SK-N-SH (cell line): ENCODE measurements at regions of chr3 and their contacts with region 1.

Region 1: DNA sequence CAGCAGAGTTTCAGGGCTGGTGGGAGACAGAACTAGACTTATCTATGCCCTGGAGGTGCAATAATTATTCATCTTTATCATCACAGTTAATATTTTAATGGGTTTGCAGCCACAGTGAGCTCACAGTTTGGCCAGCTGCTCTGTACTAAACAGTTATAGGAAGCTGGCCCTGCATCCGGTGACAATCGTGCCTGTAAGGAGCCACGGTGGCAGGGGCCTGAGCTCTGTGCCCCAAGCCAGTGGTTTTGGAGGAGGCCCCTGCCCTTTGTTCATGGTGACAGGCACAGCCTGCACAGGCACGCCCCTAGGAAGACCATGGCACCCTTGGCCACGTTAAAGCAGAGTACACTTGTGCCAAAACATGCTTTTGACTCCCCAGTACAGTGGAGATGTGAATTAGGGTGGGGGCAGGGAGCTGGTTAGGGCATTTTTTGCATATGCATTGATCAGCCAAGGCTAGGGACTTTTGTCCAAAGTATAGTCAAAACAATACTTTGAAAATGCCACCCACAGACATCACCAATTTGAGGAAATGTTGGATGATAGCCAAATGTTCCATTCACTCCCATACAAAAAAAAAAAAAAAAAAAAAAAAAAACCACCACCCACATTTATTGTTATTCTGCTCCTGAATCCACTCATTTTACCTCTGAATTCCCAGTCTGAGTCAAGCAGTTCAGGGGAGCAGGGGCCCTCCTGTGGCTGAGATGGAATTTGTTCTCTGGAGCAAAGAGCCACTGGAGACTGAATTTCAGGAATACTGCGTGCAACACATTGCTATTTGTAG is 3.4 kb upstream of the RFTN1 start:
- DNase-seq: peak; percentile 58
- H3K4me3 ChIP-seq: no peak overlapping the region; a peak in 1 of 4 replicates
- H3K27ac ChIP-seq: peak overlapping the region in 1 of 2 experiments; percentile 100; a peak in 2 of 4 replicates
- H3K4me1 ChIP-seq: peaks cover 7 to 66% of the 10 kb centered on the region in 2 experiments; a peak in 2 of 4 replicates
- H3K27me3 ChIP-seq: no peaks in the 10 kb centered on the region
- CTCF ChIP-seq: peak; percentile 67
- EP300 ChIP-seq: peak in 1 of 2 experiments; percentile 94; a peak in 2 of 4 replicates
- RAD21 ChIP-seq: peak; percentile 85

Region 2: DNA sequence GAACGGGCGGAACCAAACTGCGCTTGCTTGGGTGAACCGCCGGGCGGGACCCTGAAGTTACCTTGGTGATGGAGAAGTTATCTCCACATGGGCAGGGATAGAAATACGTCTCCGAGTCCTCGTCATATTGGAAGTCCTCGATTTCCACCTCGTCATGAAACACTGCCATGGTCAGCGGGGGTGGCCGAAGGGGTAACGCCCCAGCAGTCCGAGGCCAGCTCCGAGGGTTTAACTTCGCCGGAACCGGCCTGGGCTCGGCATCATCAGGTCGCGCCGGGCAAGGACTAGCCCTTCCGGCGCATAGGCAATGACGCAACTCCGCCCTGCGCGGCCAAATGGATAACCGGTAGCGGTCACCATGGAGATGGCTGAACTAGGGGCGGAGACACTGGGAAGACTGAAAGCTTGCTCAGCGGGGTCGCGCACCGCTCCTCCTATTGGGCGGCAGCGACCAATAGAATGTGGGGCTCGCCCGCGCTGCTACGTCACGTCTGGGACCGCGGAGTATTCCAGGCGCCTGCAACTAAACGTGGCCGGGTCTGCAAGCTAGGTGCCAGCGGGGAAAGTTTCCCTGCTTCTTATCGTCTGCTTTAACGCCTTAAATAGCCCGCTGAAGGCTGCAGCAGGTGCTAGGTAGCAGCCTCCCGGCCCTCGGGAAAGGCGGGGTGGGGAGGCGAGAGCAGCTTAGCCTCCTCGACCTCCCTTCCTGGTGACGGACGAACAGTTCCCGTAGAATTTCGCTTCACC is 252.0 kb before region 1 on chr3 and contains the starts of genes DPH3 and OXNAD1:
- CTCF ChIA-PET with region 1: interaction called, 4 read pairs
- POLR2A ChIA-PET with region 1: interaction called, 11 read pairs
- DNase-seq: peak; percentile 93
- H3K4me3 ChIP-seq: peak within 1 kb of the TSS; percentile 83 to 86
- H3K27ac ChIP-seq: peak within 1 kb of the TSS; percentile 83 to 86
- H3K4me1 ChIP-seq: peaks cover 5 to 17% of the 10 kb centered on the region in 2 experiments
- H3K27me3 ChIP-seq: no peaks in the 10 kb centered on the region
- CTCF ChIP-seq: no peak
- EP300 ChIP-seq: no peak
- RAD21 ChIP-seq: no peak
- polyA plus RNA-seq, gene DPH3: 8.5 and 10.8 TPM in 2 replicates
- polyA plus RNA-seq, gene OXNAD1: 6.9 and 10.0 TPM in 2 replicates

Region 3: GRCh38 chr3:16441371-16441875 is 75.5 kb before region 1 on chr3:
- CTCF ChIA-PET with region 1: interaction called, 5 read pairs
- POLR2A ChIA-PET with region 1: interaction called, 11 read pairs
- DNase-seq: peak; percentile 36
- H3K4me3 ChIP-seq: no peak overlapping the region
- H3K27ac ChIP-seq: peak overlapping the region in 1 of 2 experiments; percentile 96; a peak in 2 of 4 replicates
- H3K4me1 ChIP-seq: peaks cover 6 to 40% of the 10 kb centered on the region in 2 experiments; a peak in 3 of 4 replicates
- H3K27me3 ChIP-seq: no peaks in the 10 kb centered on the region
- CTCF ChIP-seq: no peak
- EP300 ChIP-seq: peak in 1 of 2 experiments; percentile 93; a peak in 2 of 4 replicates
- RAD21 ChIP-seq: peak; percentile 19; the same call in 1 of the 2 replicates

Region 4: DNA sequence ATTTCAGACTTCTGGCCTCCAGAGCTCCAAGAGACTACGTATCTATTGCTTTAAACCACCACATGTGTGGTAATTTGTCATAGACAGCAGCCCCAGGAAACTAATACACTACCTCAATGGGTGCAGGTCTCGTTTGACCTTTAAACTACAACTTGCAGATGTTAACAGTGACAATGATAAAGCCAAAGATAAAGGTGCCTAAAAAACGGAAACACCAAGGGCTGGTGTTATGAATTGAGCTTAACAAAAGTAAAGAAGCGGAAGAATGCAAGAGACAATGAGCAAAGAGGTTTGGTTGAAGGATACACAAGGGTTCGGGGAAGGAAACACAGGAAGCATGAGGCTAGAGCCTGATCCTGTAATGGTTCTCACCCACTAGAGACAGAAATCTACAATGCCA is 54.2 kb before region 1 on chr3:
- CTCF ChIA-PET with region 1: interaction called, 6 read pairs
- POLR2A ChIA-PET with region 1: interaction called, 17 read pairs
- DNase-seq: no peak
- H3K4me3 ChIP-seq: no peak overlapping the region
- H3K27ac ChIP-seq: peak overlapping the region in 1 of 2 experiments; percentile 96; a peak in 2 of 4 replicates
- H3K4me1 ChIP-seq: peaks cover 5 to 37% of the 10 kb centered on the region in 2 experiments; a peak in 3 of 4 replicates
- H3K27me3 ChIP-seq: no peaks in the 10 kb centered on the region
- CTCF ChIP-seq: no peak
- EP300 ChIP-seq: no peak
- RAD21 ChIP-seq: no peak

Region 5: GRCh38 chr3:16489326-16490277 is 27.3 kb before region 1 on chr3:
- CTCF ChIA-PET with region 1: interaction called, 6 read pairs
- POLR2A ChIA-PET with region 1: interaction called, 51 read pairs
- DNase-seq: peak; percentile 33
- H3K4me3 ChIP-seq: no peak overlapping the region
- H3K27ac ChIP-seq: peak overlapping the region in 1 of 2 experiments; percentile 78; a peak in 2 of 4 replicates
- H3K4me1 ChIP-seq: peaks cover 4 to 28% of the 10 kb centered on the region in 2 experiments; a peak in 3 of 4 replicates
- H3K27me3 ChIP-seq: no peaks in the 10 kb centered on the region
- CTCF ChIP-seq: no peak
- EP300 ChIP-seq: peak in 1 of 2 experiments; percentile 63; a peak in 1 of 4 replicates
- RAD21 ChIP-seq: no peak; the same call in 1 of the 2 replicates

Region 6: GRCh38 chr3:16529264-16529663 is 12.4 kb after region 1 on chr3:
- CTCF ChIA-PET with region 1: interaction called, 14 read pairs
- POLR2A ChIA-PET with region 1: interaction called, 3 read pairs
- DNase-seq: no peak
- H3K4me3 ChIP-seq: no peak overlapping the region
- H3K27ac ChIP-seq: no peak overlapping the region
- H3K4me1 ChIP-seq: peaks cover 0 to 6% of the 10 kb centered on the region in 2 experiments; a peak in 2 of 4 replicates
- H3K27me3 ChIP-seq: no peaks in the 10 kb centered on the region; the same call in 1 of the 2 replicates
- CTCF ChIP-seq: peak; percentile 20
- EP300 ChIP-seq: no peak
- RAD21 ChIP-seq: no peak

Region 7: GRCh38 chr3:16550676-16551341 is 33.9 kb after region 1 on chr3:
- CTCF ChIA-PET with region 1: interaction called, 25 read pairs
- POLR2A ChIA-PET with region 1: interaction called, 13 read pairs
- DNase-seq: peak; percentile 73
- H3K4me3 ChIP-seq: peak overlapping the region in 1 of 2 experiments; percentile 18; a peak in 1 of 4 replicates
- H3K27ac ChIP-seq: peak overlapping the region in 1 of 2 experiments; percentile 90; a peak in 2 of 4 replicates
- H3K4me1 ChIP-seq: peaks cover 0 to 7% of the 10 kb centered on the region in 2 experiments; a peak in 2 of 4 replicates
- H3K27me3 ChIP-seq: no peaks in the 10 kb centered on the region
- CTCF ChIP-seq: peak; percentile 85
- EP300 ChIP-seq: 0 out of 4 replicates have a peak, but pooled peaks of 1 of the 2 experiments have one; percentile 5
- RAD21 ChIP-seq: peak; percentile 98